Lower leg skin (tissue), 4 donors: ENCODE measurements at regions of chr18 and their contacts with region 1.

Region 1: GRCh38 chr18:11733031-11733430 is 44.0 kb downstream of the GNAL start:
- DNase-seq: peak; percentile 69 to 96
- H3K4me3 ChIP-seq: no peak overlapping the region
- CTCF ChIP-seq: no peak
- POLR2A ChIP-seq: no peak

Region 2: DNA sequence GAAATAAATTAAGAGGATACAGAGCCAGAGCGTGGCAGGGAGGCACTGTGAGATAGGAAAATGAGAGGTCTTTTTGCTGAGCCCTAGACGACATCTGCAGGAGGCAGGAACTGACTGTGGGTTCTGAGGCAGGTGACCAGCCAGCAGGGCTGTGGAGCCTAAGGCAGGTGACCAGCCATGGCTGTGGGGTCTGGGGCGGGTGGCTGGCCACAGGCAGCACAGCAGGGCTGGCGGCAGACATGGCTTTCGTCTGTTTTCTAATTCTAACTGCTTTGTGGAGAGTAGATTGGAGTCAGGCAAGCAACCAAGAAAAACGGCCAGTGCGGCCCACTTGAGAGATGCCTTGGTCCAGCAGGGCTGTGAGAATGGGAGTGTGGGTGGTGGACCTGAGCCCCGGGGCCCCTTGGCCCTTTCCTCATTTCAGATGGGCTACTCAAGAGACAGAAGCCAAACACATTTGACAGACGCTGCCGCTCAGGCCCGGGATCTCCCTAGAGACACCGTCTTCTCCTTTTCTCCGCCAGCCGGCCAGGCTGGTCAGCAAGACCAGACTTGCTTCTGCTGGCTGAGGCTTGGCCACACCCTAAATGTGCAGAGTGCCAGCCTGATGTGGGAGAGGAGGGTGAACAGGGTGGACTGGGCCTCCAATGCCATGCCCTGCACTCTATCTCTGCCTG is 63.6 kb before region 1 on chr18:
- intact Hi-C with region 1: no loop called
- DNase-seq: peak in 1 of 2 donors; percentile 46
- H3K4me3 ChIP-seq: no peak overlapping the region
- CTCF ChIP-seq: no peak
- POLR2A ChIP-seq: no peak

Region 3: GRCh38 chr18:11818486-11819203 is 85.6 kb after region 1 on chr18:
- intact Hi-C with region 1: no loop called
- DNase-seq: no peak
- H3K4me3 ChIP-seq: no peak overlapping the region
- CTCF ChIP-seq: no peak
- POLR2A ChIP-seq: no peak

Region 4: GRCh38 chr18:12049978-12050811 is 317.2 kb after region 1 on chr18:
- intact Hi-C with region 1: loop called (anchors 10 kb)
- DNase-seq: peak in 1 of 2 donors; percentile 11
- H3K4me3 ChIP-seq: no peak overlapping the region
- CTCF ChIP-seq: no peak
- POLR2A ChIP-seq: no peak